CD4-positive, alpha-beta memory T cell (primary cell): ENCODE measurements at regions of chr6 and their contacts with region 1.

Region 1: GRCh38 chr6:110039364-110039980 is 61.4 kb downstream of the GPR6 start:
- DNase-seq: peak; percentile 73 to 77 (median 75)
- H3K4me3 ChIP-seq: peak overlapping the region; percentile 49 to 57
- H3K4me3 Mint-ChIP-seq: peak overlapping the region; percentile 88 to 96 (median 94)
- H3K27ac ChIP-seq: peak overlapping the region; percentile 34
- H3K27ac Mint-ChIP-seq: peak overlapping the region; percentile 59 to 94 (median 88)
- H3K4me1 ChIP-seq: peaks cover 11% of the 10 kb centered on the region
- H3K4me1 Mint-ChIP-seq: peaks cover 11 to 15% (median 13%) of the 10 kb centered on the region in 4 donors
- H3K27me3 ChIP-seq: no peaks in the 10 kb centered on the region
- H3K27me3 Mint-ChIP-seq: no peaks in the 10 kb centered on the region

Region 2: DNA sequence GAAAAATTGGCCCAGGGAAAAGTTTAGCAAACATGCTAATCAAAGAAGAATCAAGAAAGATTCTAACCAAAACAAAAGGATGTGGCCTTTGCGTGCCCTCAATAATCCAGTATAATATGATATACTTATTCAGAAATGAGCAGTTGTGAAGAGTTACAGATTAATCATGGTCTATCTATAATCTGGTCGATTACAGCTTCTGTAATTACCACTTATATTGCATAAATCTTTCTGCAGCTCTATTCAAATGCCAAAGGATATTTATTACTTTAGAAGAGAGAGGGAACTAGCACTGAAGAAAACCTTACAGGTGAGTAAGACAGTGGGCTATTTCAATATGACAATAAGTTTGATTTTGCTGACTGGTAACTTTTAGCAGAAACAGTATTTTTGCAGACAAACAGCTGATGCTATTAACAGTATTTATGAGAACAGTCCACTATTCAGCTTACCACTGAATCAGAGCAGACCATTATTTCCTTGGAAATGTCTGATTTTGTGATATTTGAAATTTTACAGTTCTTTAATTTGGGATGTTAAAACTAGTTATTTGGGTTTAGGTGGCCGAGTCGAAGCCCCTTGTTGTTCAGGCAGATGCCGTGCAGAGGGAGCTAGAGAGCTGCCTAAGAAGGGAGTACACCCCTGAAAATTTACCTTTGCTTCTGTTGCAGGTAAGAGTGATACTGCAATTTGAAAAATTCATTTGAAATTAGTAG is 851.9 kb before region 1 on chr6:
- CTCF ChIA-PET with region 1: interaction called, 42 read pairs
- POLR2A ChIA-PET with region 1: no interaction called
- intact Hi-C with region 1: loop called (anchors 1 kb)
- DNase-seq: peak; percentile 52 to 62 (median 59)
- H3K4me3 ChIP-seq: no peak overlapping the region
- H3K4me3 Mint-ChIP-seq: no peak overlapping the region
- H3K27ac ChIP-seq: no peak overlapping the region
- H3K27ac Mint-ChIP-seq: no peak overlapping the region
- H3K4me1 ChIP-seq: no peaks in the 10 kb centered on the region
- H3K4me1 Mint-ChIP-seq: peaks cover 0 to 5% (median 0%) of the 10 kb centered on the region in 4 donors
- H3K27me3 ChIP-seq: peaks cover 6% of the 10 kb centered on the region
- H3K27me3 Mint-ChIP-seq: peaks cover 3 to 10% of the 10 kb centered on the region in 2 donors

Region 3: GRCh38 chr6:109526905-109527628 is 512.4 kb before region 1 on chr6:
- CTCF ChIA-PET with region 1: interaction called, 90 read pairs
- POLR2A ChIA-PET with region 1: no interaction called
- intact Hi-C with region 1: no loop called
- DNase-seq: peak; percentile 48 to 64 (median 52)
- H3K4me3 ChIP-seq: no peak overlapping the region
- H3K4me3 Mint-ChIP-seq: no peak overlapping the region
- H3K27ac ChIP-seq: no peak overlapping the region
- H3K27ac Mint-ChIP-seq: peak overlapping the region in 2 of 7 donors; percentile 2 to 52
- H3K4me1 ChIP-seq: no peaks in the 10 kb centered on the region
- H3K4me1 Mint-ChIP-seq: peaks cover 0 to 3% (median 0%) of the 10 kb centered on the region in 4 donors
- H3K27me3 ChIP-seq: no peaks in the 10 kb centered on the region
- H3K27me3 Mint-ChIP-seq: peaks cover 0 to 3% of the 10 kb centered on the region in 2 donors

Region 4: DNA sequence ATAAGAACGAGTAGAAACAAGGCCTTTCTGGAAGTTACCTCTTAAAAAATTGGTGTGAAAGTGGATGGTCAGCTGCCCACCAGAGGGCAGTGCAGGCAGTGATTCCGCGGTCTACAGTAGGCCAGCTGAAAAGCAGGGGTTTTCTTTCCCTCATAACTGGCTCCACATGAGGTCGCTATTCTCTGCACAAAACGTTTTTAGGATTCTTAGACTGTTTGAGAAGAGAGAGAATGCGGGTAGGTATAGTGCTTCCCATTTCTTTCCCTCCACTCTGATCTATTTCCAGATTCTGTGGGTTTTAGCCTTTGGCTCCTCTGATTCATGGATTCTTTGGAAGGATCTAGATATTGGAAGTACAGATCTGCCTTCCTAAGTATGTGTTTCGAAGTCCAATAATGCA is 334.2 kb before region 1 on chr6:
- CTCF ChIA-PET with region 1: interaction called, 115 read pairs
- POLR2A ChIA-PET with region 1: interaction called, 10 read pairs
- intact Hi-C with region 1: loop called (anchors 1 kb)
- DNase-seq: peak; percentile 58 to 69 (median 65)
- H3K4me3 ChIP-seq: no peak overlapping the region
- H3K4me3 Mint-ChIP-seq: no peak overlapping the region
- H3K27ac ChIP-seq: no peak overlapping the region
- H3K27ac Mint-ChIP-seq: peak overlapping the region in 2 of 7 donors; percentile 14
- H3K4me1 ChIP-seq: no peaks in the 10 kb centered on the region
- H3K4me1 Mint-ChIP-seq: peaks cover 10 to 16% (median 15%) of the 10 kb centered on the region in 4 donors
- H3K27me3 ChIP-seq: no peaks in the 10 kb centered on the region
- H3K27me3 Mint-ChIP-seq: no peaks in the 10 kb centered on the region

Region 5: GRCh38 chr6:110029144-110029543 is 10.3 kb before region 1 on chr6:
- CTCF ChIA-PET with region 1: interaction called, 38 read pairs
- POLR2A ChIA-PET with region 1: no interaction called
- intact Hi-C with region 1: no loop called
- DNase-seq: no peak
- H3K4me3 ChIP-seq: no peak overlapping the region
- H3K4me3 Mint-ChIP-seq: no peak overlapping the region
- H3K27ac ChIP-seq: no peak overlapping the region
- H3K27ac Mint-ChIP-seq: no peak overlapping the region
- H3K4me1 ChIP-seq: no peaks in the 10 kb centered on the region
- H3K4me1 Mint-ChIP-seq: no peaks in the 10 kb centered on the region
- H3K27me3 ChIP-seq: no peaks in the 10 kb centered on the region
- H3K27me3 Mint-ChIP-seq: peaks cover 1 to 2% of the 10 kb centered on the region in 2 donors

Region 6: GRCh38 chr6:110389689-110390382 is 350.4 kb after region 1 on chr6:
- CTCF ChIA-PET with region 1: interaction called, 53 read pairs
- POLR2A ChIA-PET with region 1: interaction called, 4 read pairs
- intact Hi-C with region 1: loop called (anchors 1 kb)
- DNase-seq: no peak
- H3K4me3 ChIP-seq: no peak overlapping the region
- H3K4me3 Mint-ChIP-seq: peak overlapping the region in 1 of 8 donors; percentile 7
- H3K27ac ChIP-seq: no peak overlapping the region
- H3K27ac Mint-ChIP-seq: peak overlapping the region in 2 of 7 donors; percentile 43 to 74
- H3K4me1 ChIP-seq: no peaks in the 10 kb centered on the region
- H3K4me1 Mint-ChIP-seq: peaks cover 3 to 13% (median 11%) of the 10 kb centered on the region in 4 donors
- H3K27me3 ChIP-seq: no peaks in the 10 kb centered on the region
- H3K27me3 Mint-ChIP-seq: no peaks in the 10 kb centered on the region

Region 7: GRCh38 chr6:110512979-110513378 is 473.5 kb after region 1 on chr6:
- CTCF ChIA-PET with region 1: no interaction called
- POLR2A ChIA-PET with region 1: no interaction called
- intact Hi-C with region 1: no loop called
- DNase-seq: no peak
- H3K4me3 ChIP-seq: no peak overlapping the region
- H3K4me3 Mint-ChIP-seq: no peak overlapping the region
- H3K27ac ChIP-seq: no peak overlapping the region
- H3K27ac Mint-ChIP-seq: no peak overlapping the region
- H3K4me1 ChIP-seq: no peaks in the 10 kb centered on the region
- H3K4me1 Mint-ChIP-seq: no peaks in the 10 kb centered on the region
- H3K27me3 ChIP-seq: no peaks in the 10 kb centered on the region
- H3K27me3 Mint-ChIP-seq: peaks cover 5 to 19% of the 10 kb centered on the region in 2 donors